HCT116 (cell line): ENCODE measurements at regions of chr2 and their contacts with region 1.

Region 1: DNA sequence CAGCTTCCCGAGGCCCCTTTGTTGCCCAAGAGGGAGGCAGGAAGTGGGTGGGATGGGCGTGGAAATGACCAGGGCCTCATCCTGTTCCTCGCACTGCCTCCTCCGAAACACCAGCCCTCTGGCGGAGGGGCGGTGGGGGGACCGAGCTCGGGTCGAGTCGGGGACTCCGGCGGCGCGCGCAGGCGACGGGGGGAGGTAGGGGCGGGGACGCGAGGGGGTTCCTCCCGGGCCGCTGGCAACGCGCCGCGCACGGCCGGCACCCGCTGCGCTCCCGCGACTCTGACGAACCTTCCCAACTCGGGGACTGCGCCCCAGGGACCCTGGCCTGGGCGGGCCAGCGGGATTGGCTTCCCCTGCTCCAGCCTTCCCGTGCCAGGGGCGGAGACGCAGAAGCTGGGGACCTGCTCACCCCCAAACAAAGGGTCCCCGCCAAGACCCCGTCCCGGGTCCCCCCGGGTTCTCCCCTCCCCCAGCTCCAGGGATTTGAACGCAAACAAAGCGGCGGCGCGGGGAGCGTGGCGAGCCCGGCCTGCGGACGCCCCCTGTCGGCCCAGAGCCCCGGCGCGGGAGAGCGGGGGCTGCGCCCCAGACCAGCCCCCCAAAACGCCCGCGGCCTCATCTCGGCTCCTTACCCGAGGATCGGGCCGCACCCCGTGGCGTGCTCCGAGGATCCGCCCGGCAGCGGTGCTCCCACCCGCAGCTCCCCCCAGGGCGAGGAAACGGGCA is 1.2 kb downstream of the SEMA4C start:
- DNase-seq: peak; percentile 54
- ATAC-seq: peak; percentile 76
- H3K4me3 ChIP-seq: peak overlapping the region; percentile 66 to 82
- H3K27ac ChIP-seq: peak overlapping the region; percentile 93
- H3K4me1 ChIP-seq: peaks cover 22 to 36% of the 10 kb centered on the region in 2 experiments
- H3K27me3 ChIP-seq: no peaks in the 10 kb centered on the region
- CTCF ChIP-seq: peak in 2 of 3 experiments; percentile 72 to 79; a peak in 5 of 6 replicates
- POLR2A ChIP-seq: peak; percentile 28
- RAD21 ChIP-seq: no peak

Region 2: GRCh38 chr2:96773922-96774321 is 94.8 kb before region 1 on chr2:
- CTCF ChIA-PET with region 1: no interaction called
- POLR2A ChIA-PET with region 1: no interaction called
- RAD21 ChIA-PET with region 1: no interaction called
- intact Hi-C with region 1: no loop called
- DNase-seq: no peak
- ATAC-seq: no peak
- H3K4me3 ChIP-seq: no peak overlapping the region
- H3K27ac ChIP-seq: no peak overlapping the region
- H3K4me1 ChIP-seq: peaks cover 0 to 7% of the 10 kb centered on the region in 2 experiments; a peak in 1 of 4 replicates
- H3K27me3 ChIP-seq: no peaks in the 10 kb centered on the region
- CTCF ChIP-seq: no peak
- POLR2A ChIP-seq: no peak
- RAD21 ChIP-seq: no peak

Region 3: DNA sequence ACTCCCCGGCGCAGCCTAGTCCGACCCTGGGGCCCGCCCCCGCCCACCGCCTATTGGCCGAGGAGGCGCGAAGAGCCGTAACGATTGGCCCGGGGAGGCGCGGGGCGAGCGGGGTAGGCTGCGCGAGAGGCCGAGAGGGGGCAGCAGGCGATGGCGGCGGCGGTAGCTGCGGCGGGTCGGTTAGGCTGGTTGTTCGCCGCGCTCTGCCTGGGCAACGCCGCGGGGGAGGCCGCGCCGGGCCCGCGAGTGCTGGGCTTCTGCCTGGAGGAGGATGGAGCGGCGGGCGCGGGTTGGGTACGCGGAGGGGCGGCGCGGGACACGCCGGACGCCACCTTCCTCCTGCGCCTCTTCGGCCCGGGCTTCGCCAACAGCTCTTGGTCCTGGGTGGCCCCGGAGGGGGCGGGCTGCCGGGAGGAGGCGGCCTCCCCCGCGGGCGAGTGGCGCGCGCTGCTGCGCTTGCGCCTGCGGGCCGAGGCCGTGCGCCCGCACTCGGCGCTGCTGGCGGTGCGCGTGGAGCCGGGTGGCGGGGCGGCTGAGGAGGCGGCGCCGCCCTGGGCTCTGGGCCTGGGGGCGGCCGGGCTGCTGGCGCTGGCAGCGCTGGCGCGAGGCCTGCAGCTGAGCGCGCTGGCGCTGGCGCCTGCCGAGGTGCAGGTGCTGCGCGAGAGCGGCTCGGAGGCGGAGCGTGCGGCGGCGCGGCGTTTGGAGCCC is 52.4 kb before region 1 on chr2 and contains the start of gene CNNM3:
- CTCF ChIA-PET with region 1: no interaction called
- POLR2A ChIA-PET with region 1: no interaction called
- RAD21 ChIA-PET with region 1: no interaction called
- intact Hi-C with region 1: loop called (anchors 2 kb)
- DNase-seq: peak; percentile 71
- ATAC-seq: peak; percentile 94
- H3K4me3 ChIP-seq: peak within 1 kb of the TSS; percentile 67 to 79
- H3K27ac ChIP-seq: peak within 1 kb of the TSS; percentile 91
- H3K4me1 ChIP-seq: peaks cover 11 to 21% of the 10 kb centered on the region in 2 experiments
- H3K27me3 ChIP-seq: no peaks in the 10 kb centered on the region
- CTCF ChIP-seq: peak in 2 of 3 experiments; percentile 43 to 62; a peak in 4 of 6 replicates
- POLR2A ChIP-seq: peak; percentile 45
- RAD21 ChIP-seq: no peak
- total RNA-seq, gene CNNM3: 31.1 TPM

Region 4: GRCh38 chr2:96881349-96882195 is 12.9 kb after region 1 on chr2:
- CTCF ChIA-PET with region 1: no interaction called
- POLR2A ChIA-PET with region 1: no interaction called
- RAD21 ChIA-PET with region 1: no interaction called
- intact Hi-C with region 1: no loop called
- DNase-seq: no peak
- ATAC-seq: no peak
- H3K4me3 ChIP-seq: no peak overlapping the region
- H3K27ac ChIP-seq: no peak overlapping the region
- H3K4me1 ChIP-seq: peaks cover 0 to 13% of the 10 kb centered on the region in 2 experiments; a peak in 1 of 4 replicates
- H3K27me3 ChIP-seq: no peaks in the 10 kb centered on the region
- CTCF ChIP-seq: no peak
- POLR2A ChIP-seq: no peak
- RAD21 ChIP-seq: no peak

Region 5: GRCh38 chr2:98444436-98445176 is 1575.9 kb after region 1 on chr2 and contains the start of gene INPP4A:
- CTCF ChIA-PET with region 1: no interaction called
- POLR2A ChIA-PET with region 1: no interaction called
- RAD21 ChIA-PET with region 1: no interaction called
- intact Hi-C with region 1: no loop called
- DNase-seq: peak; percentile 21
- ATAC-seq: peak; percentile 91
- H3K4me3 ChIP-seq: peak within 1 kb of the TSS; percentile 69 to 71
- H3K27ac ChIP-seq: peak within 1 kb of the TSS; percentile 51
- H3K4me1 ChIP-seq: peaks cover 5 to 17% of the 10 kb centered on the region in 2 experiments; a peak in 3 of 4 replicates
- H3K27me3 ChIP-seq: no peaks in the 10 kb centered on the region
- CTCF ChIP-seq: no peak
- POLR2A ChIP-seq: peak; percentile 72
- RAD21 ChIP-seq: no peak
- total RNA-seq, gene INPP4A: 18.5 TPM